ENCODE measurements at regions of chr17 and their contacts with region 1.

Region 1: DNA sequence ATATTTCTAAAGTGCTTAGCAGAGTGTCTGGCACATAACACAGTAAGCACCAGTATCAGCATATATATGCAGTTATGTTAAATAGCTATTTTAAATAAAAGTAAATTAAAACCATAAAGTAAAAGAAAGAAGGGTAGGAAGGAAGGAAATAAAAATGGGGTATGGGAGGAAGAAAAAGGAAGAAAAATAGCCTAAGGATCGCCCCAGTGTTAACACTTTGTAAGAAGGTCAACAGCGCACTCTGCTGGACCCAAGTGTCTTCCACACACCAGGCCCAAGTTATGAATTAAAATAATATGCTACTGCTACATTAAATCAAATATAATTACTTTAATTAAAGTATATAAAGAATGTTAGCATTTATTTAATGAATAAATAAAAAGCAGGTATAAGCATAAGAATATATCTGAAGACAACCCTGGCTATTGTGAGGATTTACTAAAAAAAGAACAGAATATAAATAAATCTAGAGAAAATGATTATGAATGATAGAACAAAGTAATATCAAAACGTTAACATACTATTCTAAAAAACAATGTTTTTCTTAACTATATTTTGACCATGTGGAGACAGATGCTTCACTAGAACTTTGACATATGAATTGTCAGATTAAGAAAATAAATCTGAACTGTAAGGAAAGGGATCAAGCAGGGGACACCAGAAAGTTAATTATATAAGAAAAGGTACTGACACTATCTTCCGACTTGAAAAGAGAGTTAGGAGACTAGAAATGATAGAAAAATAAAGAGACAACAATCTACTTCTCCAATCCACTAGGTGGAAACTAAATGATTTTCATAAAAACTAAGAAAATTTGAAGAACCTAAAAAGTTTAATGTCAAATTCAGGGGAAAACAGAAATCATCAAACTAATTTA is 25.9 kb downstream of the BRIP1 start:
- DNase-seq: peak; percentile 37 to 76
- ATAC-seq: peak; percentile 60 to 72 (median 68)
- H3K4me3 ChIP-seq: no peak overlapping the region
- H3K4me3 Mint-ChIP-seq: no peak overlapping the region
- H3K27ac ChIP-seq: no peak overlapping the region
- H3K27ac Mint-ChIP-seq: no peak overlapping the region
- H3K4me1 ChIP-seq: no peaks in the 10 kb centered on the region
- H3K4me1 Mint-ChIP-seq: no peaks in the 10 kb centered on the region
- H3K27me3 ChIP-seq: no peaks in the 10 kb centered on the region
- H3K27me3 Mint-ChIP-seq: no peaks in the 10 kb centered on the region
- CTCF ChIP-seq: peak; percentile 72

Region 2: GRCh38 chr17:60720763-60721531 is 1116.5 kb before region 1 on chr17:
- intact Hi-C with region 1: loop called (anchors 10 kb)
- DNase-seq: peak in 1 of 2 donors; percentile 79
- ATAC-seq: peak; percentile 42 to 72 (median 71)
- H3K4me3 ChIP-seq: no peak overlapping the region
- H3K4me3 Mint-ChIP-seq: no peak overlapping the region
- H3K27ac ChIP-seq: no peak overlapping the region
- H3K27ac Mint-ChIP-seq: no peak overlapping the region
- H3K4me1 ChIP-seq: no peaks in the 10 kb centered on the region
- H3K4me1 Mint-ChIP-seq: peaks cover 4 to 6% of the 10 kb centered on the region in 2 donors
- H3K27me3 ChIP-seq: no peaks in the 10 kb centered on the region
- H3K27me3 Mint-ChIP-seq: no peaks in the 10 kb centered on the region
- CTCF ChIP-seq: peak; percentile 98

Region 3: GRCh38 chr17:61635913-61636432 is 201.4 kb before region 1 on chr17:
- intact Hi-C with region 1: loop called (anchors 1 kb)
- DNase-seq: peak; percentile 28 to 75
- ATAC-seq: peak in 2 of 3 donors; percentile 50 to 68
- H3K4me3 ChIP-seq: no peak overlapping the region
- H3K4me3 Mint-ChIP-seq: no peak overlapping the region
- H3K27ac ChIP-seq: no peak overlapping the region
- H3K27ac Mint-ChIP-seq: no peak overlapping the region
- H3K4me1 ChIP-seq: no peaks in the 10 kb centered on the region
- H3K4me1 Mint-ChIP-seq: no peaks in the 10 kb centered on the region
- H3K27me3 ChIP-seq: no peaks in the 10 kb centered on the region
- H3K27me3 Mint-ChIP-seq: peaks cover 41 to 88% of the 10 kb centered on the region in 2 donors
- CTCF ChIP-seq: peak; percentile 80